Activated CD8-positive, alpha-beta T cell treated with anti-CD3 and anti-CD28 coated beads, Interleukin-2, amount 10 ng/mL, durations not matched to agents 7 days and 5 days (primary cell): ENCODE measurements at regions of chr1 and their contacts with region 1.

Region 1: DNA sequence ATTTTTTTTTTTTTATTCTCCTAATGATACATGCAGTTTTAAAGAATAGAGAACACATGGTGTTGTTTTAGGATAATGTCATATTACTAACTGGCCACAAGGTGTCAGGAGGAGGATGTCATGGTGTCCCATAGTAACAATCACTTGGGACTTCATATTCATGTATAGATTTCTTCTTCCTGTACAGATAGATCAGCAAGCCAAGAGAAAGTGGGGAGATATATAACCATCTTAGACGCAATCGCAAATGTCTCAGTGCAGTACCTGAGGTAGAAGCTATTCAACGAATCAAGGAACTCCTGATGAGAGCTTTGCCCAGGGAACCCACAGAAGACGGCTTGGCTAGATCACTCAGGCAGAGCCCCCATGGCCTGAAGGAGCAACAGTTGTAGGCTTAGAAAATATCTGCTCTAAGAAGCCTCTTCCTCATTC is 12.3 kb downstream of the OR2T11 start:
- DNase-seq: no peak
- ATAC-seq: no peak
- H3K4me3 Mint-ChIP-seq: no peak overlapping the region
- H3K27ac Mint-ChIP-seq: no peak overlapping the region
- H3K4me1 Mint-ChIP-seq: no peaks in the 10 kb centered on the region
- H3K27me3 Mint-ChIP-seq: peaks cover 3% of the 10 kb centered on the region

Region 2: GRCh38 chr1:248576260-248576980 is 46.2 kb before region 1 on chr1:
- CTCF ChIA-PET with region 1: no interaction called
- POLR2A ChIA-PET with region 1: no interaction called
- DNase-seq: no peak
- ATAC-seq: no peak
- H3K4me3 Mint-ChIP-seq: no peak overlapping the region
- H3K27ac Mint-ChIP-seq: no peak overlapping the region
- H3K4me1 Mint-ChIP-seq: no peaks in the 10 kb centered on the region
- H3K27me3 Mint-ChIP-seq: peaks cover 1% of the 10 kb centered on the region

Region 3: DNA sequence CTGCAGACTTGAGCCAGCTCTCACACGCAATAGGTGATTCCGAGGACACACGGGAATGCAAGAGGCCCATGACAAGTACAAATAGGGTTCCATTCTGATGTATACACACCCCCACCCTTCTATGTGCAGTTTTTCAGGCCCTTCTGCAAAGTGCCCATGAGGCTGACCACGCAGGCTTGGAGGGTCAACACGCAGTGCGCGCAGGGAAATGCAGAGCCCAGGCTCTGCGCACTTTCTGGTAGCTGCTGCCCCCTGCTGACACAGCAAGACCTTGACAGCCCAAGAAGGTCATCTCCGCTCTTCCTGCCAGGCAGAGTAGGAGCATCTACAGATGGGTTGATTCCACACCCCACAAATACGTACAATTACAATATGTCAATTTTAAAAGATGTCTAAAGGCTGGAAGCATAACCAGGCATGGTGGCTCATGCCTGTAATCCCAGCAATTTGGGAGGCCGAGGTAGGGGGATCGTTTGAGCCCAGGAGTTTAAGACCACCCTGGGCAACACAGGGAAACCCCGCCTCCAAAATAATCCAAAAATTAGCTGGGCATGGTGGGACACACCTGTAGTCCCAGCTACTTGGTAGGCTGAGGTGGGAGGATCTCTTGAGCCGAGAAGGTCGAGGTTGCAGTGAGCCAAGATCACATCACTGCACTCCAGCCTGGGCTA is 184.6 kb after region 1 on chr1:
- CTCF ChIA-PET with region 1: interaction called, 34 read pairs
- POLR2A ChIA-PET with region 1: no interaction called
- DNase-seq: peak; percentile 68
- ATAC-seq: peak; percentile 86
- H3K4me3 Mint-ChIP-seq: no peak overlapping the region
- H3K27ac Mint-ChIP-seq: no peak overlapping the region
- H3K4me1 Mint-ChIP-seq: peaks cover 10% of the 10 kb centered on the region
- H3K27me3 Mint-ChIP-seq: no peaks in the 10 kb centered on the region